ENCODE measurements at regions of chr1 and their contacts with region 1.

Region 1: DNA sequence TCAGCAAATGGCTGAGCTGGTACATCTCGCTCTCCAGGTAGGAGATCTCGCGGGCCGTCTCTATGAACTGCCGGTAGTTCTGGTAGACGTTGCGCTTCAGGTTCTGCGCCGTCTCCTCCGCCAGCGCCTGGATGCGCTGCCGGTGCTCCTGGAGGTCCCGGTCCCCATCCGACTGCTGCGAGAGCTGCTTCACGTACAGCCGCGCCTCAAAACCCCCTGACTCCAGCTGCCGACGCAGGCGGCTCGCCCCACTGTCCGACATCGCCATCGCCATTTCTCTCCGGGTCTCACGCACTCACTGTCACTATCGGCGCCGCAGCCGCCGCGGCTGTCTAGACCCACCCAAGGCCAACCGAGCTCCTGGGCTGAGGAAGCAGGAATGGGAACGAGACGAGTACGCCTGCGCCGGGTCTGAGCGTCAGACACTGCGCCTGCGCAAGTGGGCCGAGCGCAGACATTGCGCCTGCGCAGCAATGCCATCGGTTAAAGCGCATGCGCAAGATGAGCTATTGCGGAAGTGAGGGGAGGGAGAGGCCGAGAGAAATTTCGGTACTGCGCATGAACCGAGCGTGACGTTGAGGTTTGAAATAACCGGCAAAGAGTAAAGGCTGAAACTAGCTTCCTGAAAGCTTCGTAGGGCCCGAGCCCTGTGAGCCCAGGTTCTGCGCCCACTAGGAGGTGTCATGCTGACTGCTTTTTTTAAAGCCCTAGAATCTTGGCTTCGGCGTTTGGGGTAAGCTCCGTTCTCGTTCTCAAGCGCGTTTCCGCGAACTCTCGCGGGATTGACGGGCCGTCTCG is at the start of gene EXOC8:
- DNase-seq: peak; percentile 98

Region 2: DNA sequence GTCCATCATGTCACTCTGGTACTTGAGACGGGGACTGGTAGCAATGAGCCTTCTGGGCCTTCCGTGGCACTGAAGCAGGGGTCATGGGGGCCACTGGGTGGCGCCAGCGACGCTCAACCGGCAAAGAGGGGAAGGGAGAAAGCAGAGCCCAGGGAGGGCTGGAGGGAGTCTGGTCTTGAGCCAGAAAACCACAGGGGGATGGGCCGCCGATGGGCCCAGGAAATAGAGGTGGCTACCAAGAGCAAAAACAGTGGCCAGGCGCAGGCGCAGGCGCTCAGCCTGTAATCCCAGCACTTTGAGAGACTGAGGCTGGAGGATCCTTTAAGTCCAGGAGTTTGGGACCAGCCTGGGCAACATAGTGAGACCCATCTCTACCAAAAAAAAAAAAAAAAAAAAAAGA is 21.8 kb before region 1 on chr1:
- CTCF ChIA-PET with region 1: interaction called, 10 read pairs
- POLR2A ChIA-PET with region 1: interaction called, 7 read pairs
- DNase-seq: peak; percentile 83

Region 3: GRCh38 chr1:231421993-231422764 is 84.5 kb after region 1 on chr1 and contains the start of gene EGLN1:
- CTCF ChIA-PET with region 1: no interaction called
- POLR2A ChIA-PET with region 1: interaction called, 12 read pairs
- DNase-seq: peak; percentile 90

Region 4: GRCh38 chr1:231603598-231604275 is 266.1 kb after region 1 on chr1:
- CTCF ChIA-PET with region 1: interaction called, 3 read pairs
- POLR2A ChIA-PET with region 1: interaction called, 15 read pairs
- DNase-seq: peak; percentile 76

Measured in HEK293T (cell line).